Heart left ventricle (tissue), 16 donors: ENCODE measurements at regions of chr2 and their contacts with region 1.

Region 1: GRCh38 chr2:16756831-16757644 is 91.4 kb upstream of the CYRIA start:
- DNase-seq: peak; percentile 71 to 87 (median 80)
- ATAC-seq: peak; percentile 81 to 93 (median 90)
- H3K4me3 ChIP-seq: no peak overlapping the region
- H3K27ac ChIP-seq: peak overlapping the region in 9 of 12 donors; percentile 12 to 60 (median 28)
- H3K4me1 ChIP-seq: peaks cover 0 to 22% (median 8%) of the 10 kb centered on the region in 12 donors
- H3K27me3 ChIP-seq: no peaks in the 10 kb centered on the region
- CTCF ChIP-seq: peak; percentile 84 to 95 (median 93)
- POLR2A ChIP-seq: no peak

Region 2: DNA sequence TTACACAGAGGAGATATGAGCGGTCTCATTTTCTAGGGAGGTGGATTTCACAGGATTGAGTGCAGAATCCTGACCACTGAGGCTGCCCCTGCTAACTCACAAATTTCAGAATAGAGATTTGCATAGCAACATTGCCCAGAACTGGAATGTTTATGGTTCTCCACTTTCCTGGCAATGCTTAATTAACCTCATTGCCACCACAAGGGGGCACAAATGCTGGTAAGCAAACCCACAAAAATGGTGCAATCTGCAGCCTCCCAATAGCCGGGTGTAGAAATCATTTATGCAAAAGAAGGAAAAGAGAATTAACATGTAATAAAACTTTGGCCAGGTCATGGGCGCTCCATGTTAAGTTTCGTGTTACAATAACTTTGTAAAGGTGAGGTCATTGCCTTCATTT is 203.8 kb before region 1 on chr2:
- intact Hi-C with region 1: loop called (anchors 2 to 10 kb)
- DNase-seq: peak in 3 of 5 donors; percentile 9 to 31 (median 30)
- ATAC-seq: no peak
- H3K4me3 ChIP-seq: no peak overlapping the region
- H3K27ac ChIP-seq: no peak overlapping the region
- H3K4me1 ChIP-seq: no peaks in the 10 kb centered on the region
- H3K27me3 ChIP-seq: no peaks in the 10 kb centered on the region
- CTCF ChIP-seq: peak; percentile 38 to 68 (median 57)
- POLR2A ChIP-seq: no peak

Region 3: DNA sequence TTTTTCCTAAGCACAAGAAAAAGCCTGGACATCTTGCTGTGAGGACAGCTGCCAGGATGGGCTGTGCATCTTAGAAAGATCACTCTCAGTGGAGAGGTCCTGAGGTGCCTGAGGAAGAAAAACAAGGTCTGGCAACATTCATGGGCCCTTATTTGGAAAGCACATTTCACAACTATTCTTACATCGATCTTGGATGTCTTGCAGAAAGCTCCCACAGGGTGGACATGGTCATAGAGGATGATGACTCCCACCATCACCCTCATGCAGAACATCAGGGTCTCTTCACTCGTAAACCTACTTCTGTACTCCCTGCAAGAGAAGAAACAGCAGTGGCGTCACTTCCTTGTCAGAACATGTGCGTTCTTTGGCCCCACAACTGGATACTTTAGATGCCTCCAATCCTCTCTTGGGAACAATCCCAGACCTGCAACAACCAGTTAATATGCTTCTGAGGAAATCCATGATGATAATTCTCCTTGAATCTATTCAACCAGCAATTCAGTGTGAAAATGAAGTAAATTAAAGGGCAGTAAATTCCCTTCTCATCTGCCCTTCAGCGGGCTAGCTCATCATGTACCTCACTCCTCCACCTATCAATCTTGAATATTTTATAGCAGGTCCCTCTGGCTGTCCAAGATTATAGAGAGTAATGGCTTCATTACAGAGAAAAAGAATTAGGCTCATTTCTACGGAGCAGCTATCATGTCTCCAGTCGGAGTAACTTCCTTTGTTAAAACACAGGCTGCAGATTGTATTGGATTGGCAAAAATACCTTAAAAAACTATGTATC is 197.6 kb before region 1 on chr2:
- intact Hi-C with region 1: loop called in 7 of 10 experiments (anchors 5 to 10 kb)
- DNase-seq: no peak
- ATAC-seq: no peak
- H3K4me3 ChIP-seq: no peak overlapping the region
- H3K27ac ChIP-seq: no peak overlapping the region
- H3K4me1 ChIP-seq: no peaks in the 10 kb centered on the region
- H3K27me3 ChIP-seq: no peaks in the 10 kb centered on the region
- CTCF ChIP-seq: no peak
- POLR2A ChIP-seq: no peak

Region 4: GRCh38 chr2:16608661-16609643 is 148.1 kb before region 1 on chr2:
- intact Hi-C with region 1: loop called in 8 of 10 experiments (anchors 1 to 2 kb)
- DNase-seq: peak; percentile 81 to 91 (median 85)
- ATAC-seq: peak; percentile 83 to 92 (median 88)
- H3K4me3 ChIP-seq: peak overlapping the region in 11 of 12 donors; percentile 10 to 56 (median 51)
- H3K27ac ChIP-seq: peak overlapping the region in 3 of 12 donors; percentile 32 to 77 (median 60)
- H3K4me1 ChIP-seq: peaks cover 0 to 36% (median 10%) of the 10 kb centered on the region in 12 donors
- H3K27me3 ChIP-seq: no peaks in the 10 kb centered on the region
- CTCF ChIP-seq: peak; percentile 84 to 96 (median 93)
- POLR2A ChIP-seq: no peak

Region 5: DNA sequence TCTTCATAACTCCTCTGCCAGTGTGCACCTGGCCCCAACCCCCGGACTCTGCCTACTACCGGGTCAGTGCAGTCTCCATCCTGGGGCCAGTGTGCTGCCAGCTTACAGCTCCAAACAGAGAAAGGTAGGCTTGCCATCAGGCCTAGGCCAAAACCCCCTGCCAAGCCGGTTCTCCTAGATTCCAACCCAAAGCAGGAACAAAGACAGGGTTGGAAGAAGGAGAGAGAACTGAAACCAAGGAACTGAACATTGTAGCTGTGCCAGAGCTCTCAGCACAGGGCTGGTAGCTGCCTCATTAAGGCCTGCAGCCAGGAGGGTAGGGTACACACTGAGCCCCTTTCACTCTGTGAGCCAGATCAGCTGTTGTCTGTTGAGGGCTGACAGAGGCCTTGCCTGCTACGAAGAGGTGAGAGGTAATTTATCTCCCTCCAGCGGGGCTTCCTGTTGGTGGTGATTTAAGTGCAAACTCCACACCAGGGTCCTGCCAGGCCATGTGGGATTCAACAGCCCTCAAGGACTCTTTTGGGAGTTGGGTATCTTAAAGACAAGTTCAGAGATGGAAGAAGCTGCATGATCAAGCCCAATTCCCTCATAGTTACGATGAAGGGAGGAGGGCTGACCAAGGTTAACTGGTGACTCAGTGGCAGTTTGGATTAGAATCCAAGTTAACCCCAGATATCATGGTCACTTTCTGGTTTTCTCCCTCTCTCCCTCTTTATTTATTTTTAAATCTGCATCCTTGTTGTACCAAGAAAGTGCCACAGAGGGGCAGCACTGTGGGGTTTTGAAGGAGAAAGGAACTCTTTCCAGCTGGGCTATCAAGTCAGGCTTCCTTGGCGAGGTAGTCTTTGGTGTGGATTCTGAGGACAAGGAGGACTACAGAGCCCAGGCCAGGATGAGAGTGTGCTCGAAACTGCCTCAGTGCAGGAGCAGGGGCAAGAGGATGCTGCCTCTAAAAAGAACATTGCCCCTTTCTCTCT is 139.5 kb before region 1 on chr2:
- intact Hi-C with region 1: loop called (anchors 1 to 2 kb)
- DNase-seq: peak in 1 of 5 donors; percentile 26
- ATAC-seq: peak; percentile 11 to 47 (median 30)
- H3K4me3 ChIP-seq: no peak overlapping the region
- H3K27ac ChIP-seq: peak overlapping the region in 3 of 12 donors; percentile 0 to 76 (median 37)
- H3K4me1 ChIP-seq: peaks cover 0 to 62% (median 26%) of the 10 kb centered on the region in 12 donors
- H3K27me3 ChIP-seq: no peaks in the 10 kb centered on the region
- CTCF ChIP-seq: peak; percentile 22 to 58 (median 44)
- POLR2A ChIP-seq: no peak